Cardiac septum (tissue), 1 donor: ENCODE measurements at regions of chr2 and their contacts with region 1.

Region 1: DNA sequence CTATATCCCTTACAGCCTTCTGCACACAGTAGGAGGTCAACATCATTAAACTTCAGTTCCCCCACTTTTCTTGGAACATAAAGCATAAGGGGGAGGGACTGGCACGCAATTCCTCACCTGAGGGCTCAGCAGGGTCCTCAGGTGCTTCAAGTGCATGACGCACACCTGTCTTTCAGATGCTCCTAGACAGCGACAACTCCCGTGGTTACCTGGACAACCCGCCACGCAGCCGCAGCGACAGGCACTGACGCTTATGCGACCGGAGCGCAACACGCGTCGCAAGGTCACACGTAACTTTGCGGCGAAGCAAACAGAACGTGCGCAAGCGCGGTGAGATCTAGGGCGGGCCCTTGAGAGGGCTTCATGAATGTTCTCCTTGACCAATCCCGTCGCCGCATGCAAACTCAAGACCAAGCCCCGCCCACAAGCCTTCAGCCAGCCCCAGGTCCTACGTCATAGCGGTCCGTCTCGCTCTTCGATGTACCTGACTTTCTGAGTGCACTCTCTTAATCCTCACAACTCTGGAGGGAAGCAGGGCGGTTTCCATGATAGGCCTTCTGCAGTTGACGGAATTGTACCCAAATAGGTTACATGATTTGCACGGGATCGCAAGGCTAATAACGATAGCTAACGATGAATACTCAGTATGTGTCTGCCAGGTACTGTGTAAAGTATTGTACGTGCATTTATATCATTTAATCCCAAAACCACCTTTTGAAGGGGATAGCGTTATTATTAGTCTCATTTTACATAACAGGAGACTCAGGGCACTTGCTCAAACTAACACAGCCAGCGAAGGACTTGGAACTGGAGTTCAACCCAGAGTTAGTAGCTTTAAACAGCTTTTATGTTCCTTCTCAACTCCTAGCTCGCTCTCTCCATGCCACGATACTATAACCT is at the start of gene IFT172:
- DNase-seq: peak; percentile 99
- total RNA-seq, gene IFT172: 18.7 TPM

Region 2: GRCh38 chr2:26652361-26653041 is 837.2 kb before region 1 on chr2:
- intact Hi-C with region 1: no loop called
- DNase-seq: peak; percentile 60

Region 3: DNA sequence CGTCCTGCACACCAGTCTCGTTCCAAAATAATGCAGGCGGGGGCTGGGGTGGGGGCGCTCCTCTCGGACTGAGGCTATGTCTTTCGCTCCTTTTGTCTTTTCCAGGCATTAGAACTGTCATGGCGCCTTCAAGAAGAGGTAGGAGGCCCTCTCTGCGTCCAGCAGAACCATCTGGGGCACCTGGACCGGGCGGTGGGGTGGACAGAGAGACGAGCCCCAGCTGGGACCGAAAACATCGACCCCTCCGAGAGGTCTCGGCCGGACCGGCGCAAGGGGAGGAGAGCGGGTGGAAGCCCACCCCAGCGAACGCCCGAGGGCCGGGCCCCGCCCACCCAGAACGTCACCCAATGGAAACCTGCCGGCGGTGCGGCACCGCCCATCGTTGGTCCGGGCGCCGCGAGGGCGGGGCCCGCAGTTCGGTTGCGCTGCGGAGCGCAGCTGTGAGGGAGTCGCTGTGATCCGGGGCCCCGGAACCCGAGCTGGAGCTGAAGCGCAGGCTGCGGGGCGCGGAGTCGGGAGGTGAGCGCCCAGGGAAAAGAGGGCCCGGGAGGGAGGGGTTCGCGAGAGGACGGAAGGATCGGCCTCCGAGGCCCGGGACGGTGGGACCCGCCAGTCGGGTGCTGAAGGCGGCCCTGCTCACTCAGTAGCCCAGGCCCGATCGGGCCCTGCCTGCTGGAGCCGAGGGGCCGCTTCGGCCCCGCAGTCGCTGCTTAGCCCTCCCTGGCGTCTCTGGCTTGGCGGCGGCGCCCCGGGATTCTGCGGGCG is 61.4 kb before region 1 on chr2 and contains the start of gene NRBP1:
- intact Hi-C with region 1: loop called (anchors 5 kb)
- DNase-seq: peak; percentile 96
- total RNA-seq, gene NRBP1: 64.6 TPM

Region 4: DNA sequence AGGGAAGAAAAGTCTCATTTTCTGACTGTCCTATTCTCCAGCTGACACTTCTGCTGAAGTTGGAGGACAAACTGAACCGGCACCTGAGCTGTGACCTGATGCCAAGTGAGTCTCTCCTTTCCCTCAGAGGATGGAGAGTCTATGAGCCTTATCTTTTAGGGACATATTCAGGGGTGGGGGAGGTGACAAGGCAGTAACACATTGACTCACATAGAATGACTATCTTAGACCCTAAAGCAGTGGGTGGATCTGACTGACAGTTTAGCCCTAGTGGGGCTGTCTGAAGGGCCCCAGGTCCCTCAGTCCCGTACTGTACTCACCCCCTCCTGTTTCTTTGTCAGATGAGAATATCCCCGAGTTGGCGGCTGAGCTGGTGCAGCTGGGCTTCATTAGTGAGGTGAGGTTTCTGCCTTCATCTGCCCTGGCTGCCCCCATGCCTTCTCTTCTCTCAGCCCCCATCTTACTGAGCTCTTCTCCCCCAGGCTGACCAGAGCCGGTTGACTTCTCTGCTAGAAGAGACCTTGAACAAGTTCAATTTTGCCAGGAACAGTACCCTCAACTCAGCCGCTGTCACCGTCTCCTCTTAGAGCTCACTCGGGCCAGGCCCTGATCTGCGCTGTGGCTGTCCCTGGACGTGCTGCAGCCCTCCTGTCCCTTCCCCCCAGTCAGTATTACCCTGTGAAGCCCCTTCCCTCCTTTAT is 48.4 kb before region 1 on chr2:
- intact Hi-C with region 1: no loop called
- DNase-seq: no peak

Region 5: DNA sequence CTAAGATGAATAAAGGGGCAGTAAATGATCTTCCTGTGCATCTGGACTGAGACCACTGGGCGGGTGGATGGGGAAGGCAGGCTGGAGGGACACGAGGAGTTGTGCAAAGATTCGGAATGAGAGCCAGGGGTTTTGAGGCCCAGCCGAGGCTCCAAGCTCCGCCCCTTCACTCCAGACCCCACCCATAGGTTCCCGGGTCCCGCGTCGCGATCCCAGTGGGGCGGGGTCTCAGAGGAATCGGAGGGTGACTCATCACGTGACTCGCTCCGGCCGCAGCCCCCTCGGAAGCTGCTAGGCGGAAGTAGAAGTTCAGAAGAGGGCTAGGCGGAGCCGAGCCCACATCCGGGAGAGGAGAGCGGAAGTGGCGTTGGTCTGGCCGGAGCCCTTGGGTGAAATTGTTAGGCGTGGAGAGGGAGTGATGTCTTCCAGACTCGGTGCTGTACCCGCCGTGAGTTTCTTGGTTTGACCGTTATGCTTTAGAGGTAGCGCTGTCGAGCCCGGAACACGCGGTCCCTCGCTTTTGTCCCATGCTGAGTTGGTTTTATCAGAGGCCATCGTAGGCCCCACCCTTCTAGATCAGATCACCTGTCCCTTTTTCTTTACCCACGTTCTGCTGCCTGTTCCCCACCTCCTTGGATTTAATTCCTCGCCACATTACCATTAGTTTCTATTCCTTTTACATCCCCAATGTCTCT is 93.1 kb after region 1 on chr2 and contains the start of gene ZNF512:
- intact Hi-C with region 1: loop called (anchors 5 kb)
- DNase-seq: peak; percentile 96
- total RNA-seq, gene ZNF512: 20.7 TPM

Region 6: DNA sequence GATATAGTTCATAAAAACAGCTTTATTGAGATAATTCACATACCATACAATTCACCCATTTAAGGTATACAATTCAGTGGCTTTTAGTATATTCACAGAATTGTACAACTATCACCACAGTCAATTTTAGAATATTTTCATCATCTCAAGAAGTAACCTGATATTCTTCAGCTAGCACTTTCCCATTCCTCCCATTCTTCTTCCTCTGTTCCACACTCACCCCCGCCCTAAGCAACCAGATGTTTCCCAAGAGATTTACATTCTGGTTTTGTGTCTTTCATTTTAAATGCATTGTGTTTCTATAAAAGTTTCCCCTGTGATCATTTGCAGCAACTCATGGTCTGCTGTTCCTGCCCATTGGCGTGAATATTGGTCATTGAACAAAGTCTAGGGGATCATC is 144.5 kb after region 1 on chr2:
- intact Hi-C with region 1: loop called (anchors 5 kb)
- DNase-seq: no peak